ENCODE measurements at regions of chr4 and their contacts with region 1.

Region 1: GRCh38 chr4:118076958-118077766 is 42.9 kb downstream of the NDST3 start:
- H3K4me3 Mint-ChIP-seq: no peak overlapping the region
- H3K27ac Mint-ChIP-seq: no peak overlapping the region
- H3K4me1 Mint-ChIP-seq: no peaks in the 10 kb centered on the region
- H3K27me3 Mint-ChIP-seq: no peaks in the 10 kb centered on the region

Region 2: DNA sequence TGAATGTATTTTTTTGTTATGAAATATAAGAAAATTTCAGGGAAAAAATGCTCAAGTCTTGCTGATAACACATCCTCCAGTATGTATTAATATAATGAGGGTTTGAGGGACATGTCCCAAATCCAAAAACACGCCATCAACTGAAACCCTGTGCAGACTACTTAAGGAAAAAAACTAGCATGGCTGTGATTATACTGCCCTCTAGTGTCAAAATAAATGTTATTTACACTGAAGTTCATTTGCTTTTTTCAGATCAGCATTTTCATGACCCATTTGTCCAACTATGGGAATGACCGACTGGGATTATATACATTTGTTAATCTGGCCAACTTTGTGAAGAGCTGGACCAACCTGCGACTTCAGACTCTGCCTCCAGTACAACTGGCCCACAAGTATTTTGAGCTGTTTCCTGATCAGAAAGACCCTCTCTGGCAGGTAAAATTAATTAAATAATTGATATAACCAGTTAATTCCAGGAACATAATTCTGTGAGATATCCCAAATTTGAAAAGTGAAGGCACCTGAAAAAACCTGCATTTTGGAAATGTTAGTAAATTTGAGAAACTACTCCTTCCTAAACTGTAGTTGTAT is 147.2 kb after region 1 on chr4:
- intact Hi-C with region 1: loop called (anchors 5 kb)
- H3K4me3 Mint-ChIP-seq: no peak overlapping the region
- H3K27ac Mint-ChIP-seq: no peak overlapping the region
- H3K4me1 Mint-ChIP-seq: no peaks in the 10 kb centered on the region
- H3K27me3 Mint-ChIP-seq: no peaks in the 10 kb centered on the region

Region 3: GRCh38 chr4:118270492-118270891 is 193.3 kb after region 1 on chr4:
- intact Hi-C with region 1: loop called (anchors 5 kb)
- H3K4me3 Mint-ChIP-seq: no peak overlapping the region
- H3K27ac Mint-ChIP-seq: no peak overlapping the region
- H3K4me1 Mint-ChIP-seq: peaks cover 5% of the 10 kb centered on the region
- H3K27me3 Mint-ChIP-seq: no peaks in the 10 kb centered on the region

Measured in dendritic cell treated with granulocyte-macrophage colony-stimulating factor and Interleukin-4, amounts not matched to agents 40 ng/mL and 50 ng/mL, for 4 days (primary cell).